ENCODE measurements at regions of chr1 and their contacts with region 1.

Region 1: DNA sequence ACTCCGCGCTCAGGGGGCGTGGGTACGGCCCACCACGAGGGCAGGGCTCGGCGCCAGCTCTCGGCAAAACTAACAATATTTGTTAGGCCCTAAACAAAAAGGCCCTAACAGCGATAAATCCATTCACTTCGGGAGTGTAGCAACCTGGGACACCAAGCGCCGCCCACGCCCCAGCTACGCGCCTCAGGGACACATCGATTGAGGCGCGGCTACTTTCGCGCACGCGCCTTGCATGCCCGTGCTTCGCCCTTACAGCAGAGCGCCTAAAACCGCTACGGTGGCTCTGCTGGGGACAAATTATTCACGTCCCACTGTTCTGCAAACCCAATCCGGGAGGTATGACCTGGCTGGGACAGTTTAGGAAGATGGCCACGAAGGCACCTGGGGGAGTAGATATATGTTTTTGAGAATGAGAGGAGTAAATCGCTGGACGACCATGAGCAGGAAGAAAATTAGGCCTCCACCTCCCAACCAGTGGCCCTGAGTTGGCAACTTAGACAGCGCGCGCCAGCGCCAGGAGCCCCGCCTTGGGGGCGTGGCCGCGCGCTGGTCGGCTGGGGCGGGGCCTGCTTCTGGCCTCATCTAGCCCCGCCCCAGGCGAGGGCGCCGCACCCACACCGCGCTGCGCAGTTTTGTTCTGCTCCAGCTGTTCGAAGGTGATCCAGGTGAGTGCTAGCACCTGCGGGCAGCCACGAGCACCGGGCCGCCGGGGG is at the start of gene MGST3:
- DNase-seq: peak; percentile 80 to 98
- H3K4me3 ChIP-seq: peak within 1 kb of the TSS; percentile 71 to 90
- H3K27ac ChIP-seq: peak within 1 kb of the TSS; percentile 90 to 91
- H3K4me1 ChIP-seq: peaks cover 3 to 20% of the 10 kb centered on the region in 2 donors
- H3K27me3 ChIP-seq: no peaks in the 10 kb centered on the region
- CTCF ChIP-seq: no peak
- total RNA-seq, gene MGST3: 177 TPM

Region 2: DNA sequence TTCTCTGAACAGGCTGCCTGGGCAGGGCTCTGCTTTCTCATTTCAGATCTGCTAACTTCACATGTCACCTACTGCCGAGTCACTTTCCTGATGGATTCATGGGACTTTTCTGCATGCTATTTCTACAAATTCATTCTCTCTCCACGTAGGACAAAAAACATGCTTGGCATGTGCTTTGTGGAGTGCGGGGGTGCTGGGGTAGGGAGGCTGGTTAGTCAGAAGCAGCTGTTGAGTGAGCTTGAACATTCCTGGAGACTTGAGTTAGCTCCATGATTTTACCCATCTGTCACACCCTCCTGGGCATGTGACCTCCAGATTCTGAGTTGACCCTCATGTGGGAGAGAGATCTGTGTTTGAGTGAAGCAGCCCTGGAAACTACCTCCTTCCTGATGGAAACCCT is 268.1 kb after region 1 on chr1:
- intact Hi-C with region 1: loop called (anchors 2 kb)
- DNase-seq: peak; percentile 65 to 91
- H3K4me3 ChIP-seq: no peak overlapping the region
- H3K27ac ChIP-seq: peak overlapping the region; percentile 93 to 95
- H3K4me1 ChIP-seq: peaks cover 21 to 47% of the 10 kb centered on the region in 2 donors
- H3K27me3 ChIP-seq: no peaks in the 10 kb centered on the region
- CTCF ChIP-seq: no peak